Activated naive CD8-positive, alpha-beta T cell treated with anti-CD3 and anti-CD28 coated beads, Interleukin-2, amount 10 ng/mL, durations not matched to agents 7 days and 5 days (primary cell): ENCODE measurements at regions of chr6 and their contacts with region 1.

Region 1: DNA sequence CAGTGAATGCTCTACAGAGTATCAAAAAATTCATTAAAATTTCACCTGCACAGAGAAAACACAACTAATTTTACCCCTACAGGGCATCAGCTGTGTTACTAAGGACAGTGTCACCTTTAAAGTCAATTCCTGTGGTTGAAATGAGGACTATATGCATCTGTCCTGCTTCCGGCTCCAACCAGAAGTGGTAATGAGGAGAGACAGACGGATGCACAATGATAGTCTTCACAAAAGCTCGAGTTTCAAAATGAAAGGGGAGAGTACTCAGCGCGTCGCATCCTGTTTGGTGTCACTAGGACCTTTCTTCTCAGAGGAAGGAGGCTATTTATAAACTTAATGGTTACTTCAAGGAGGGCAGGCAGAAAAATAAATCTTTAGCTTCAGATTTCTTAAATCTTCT is 86.5 kb downstream of the LYRM4 start:
- DNase-seq: peak; percentile 39
- ATAC-seq: peak; percentile 97
- H3K4me3 Mint-ChIP-seq: peak overlapping the region; percentile 74
- H3K27ac Mint-ChIP-seq: peak overlapping the region; percentile 97
- H3K4me1 Mint-ChIP-seq: peaks cover 52% of the 10 kb centered on the region
- H3K27me3 Mint-ChIP-seq: no peaks in the 10 kb centered on the region

Region 2: DNA sequence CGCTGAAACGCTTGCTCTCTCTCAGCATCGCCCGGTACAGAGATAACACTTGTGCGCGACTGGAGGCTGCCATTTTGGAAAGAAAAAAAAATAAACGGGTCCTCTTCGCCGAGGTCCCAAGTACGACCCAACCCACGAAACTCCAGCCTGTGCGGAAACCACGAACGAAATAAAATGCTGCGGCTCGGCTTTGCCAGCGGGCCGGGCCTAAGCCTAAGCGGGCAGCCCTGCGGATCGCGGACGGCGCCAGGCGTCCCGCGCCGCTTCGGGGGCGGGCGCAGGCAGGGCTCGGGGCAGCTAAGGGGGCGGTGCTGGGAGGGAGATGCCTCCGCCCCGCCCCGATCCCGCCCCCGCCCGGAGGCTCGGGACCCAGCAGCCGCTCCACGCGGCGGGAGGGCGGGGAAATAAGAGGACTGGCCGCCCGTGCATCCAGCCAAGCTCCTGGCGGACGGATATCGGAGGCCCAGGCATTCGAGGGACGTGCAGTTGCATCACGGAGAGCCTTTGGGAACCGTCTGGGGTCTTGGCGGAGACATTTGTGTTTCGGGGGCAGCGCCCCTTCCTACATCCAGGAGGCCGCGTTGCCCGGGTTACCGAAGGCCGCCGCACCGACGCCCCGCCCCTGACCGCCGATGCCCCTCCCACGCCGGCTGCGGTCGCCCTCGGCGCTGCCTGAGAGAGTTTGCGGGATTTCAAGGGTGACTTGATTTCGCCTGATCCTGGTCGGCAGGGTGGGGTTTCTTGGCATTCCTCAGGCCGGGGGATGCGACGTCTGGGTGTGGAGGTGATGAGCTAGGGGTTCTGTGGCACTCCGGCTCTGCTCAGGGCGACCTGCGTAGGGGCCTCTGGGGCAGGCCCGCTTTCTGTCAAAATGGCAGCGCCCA is 86.7 kb after region 1 on chr6 and contains the starts of genes FARS2 and LYRM4:
- POLR2A ChIA-PET with region 1: interaction called, 16 read pairs
- DNase-seq: peak; percentile 98
- ATAC-seq: peak; percentile 79
- H3K4me3 Mint-ChIP-seq: peak within 1 kb of the TSS; percentile 95
- H3K27ac Mint-ChIP-seq: peak within 1 kb of the TSS; percentile 100
- H3K4me1 Mint-ChIP-seq: peaks cover 23% of the 10 kb centered on the region
- H3K27me3 Mint-ChIP-seq: no peaks in the 10 kb centered on the region
- total RNA-seq, gene FARS2: 15.5 to 18.4 TPM
- total RNA-seq, gene LYRM4: 26.5 to 27.1 TPM